Dorsolateral prefrontal cortex (tissue), 120 donors: ENCODE measurements at regions of chr12 and their contacts with region 1.

Region 1: DNA sequence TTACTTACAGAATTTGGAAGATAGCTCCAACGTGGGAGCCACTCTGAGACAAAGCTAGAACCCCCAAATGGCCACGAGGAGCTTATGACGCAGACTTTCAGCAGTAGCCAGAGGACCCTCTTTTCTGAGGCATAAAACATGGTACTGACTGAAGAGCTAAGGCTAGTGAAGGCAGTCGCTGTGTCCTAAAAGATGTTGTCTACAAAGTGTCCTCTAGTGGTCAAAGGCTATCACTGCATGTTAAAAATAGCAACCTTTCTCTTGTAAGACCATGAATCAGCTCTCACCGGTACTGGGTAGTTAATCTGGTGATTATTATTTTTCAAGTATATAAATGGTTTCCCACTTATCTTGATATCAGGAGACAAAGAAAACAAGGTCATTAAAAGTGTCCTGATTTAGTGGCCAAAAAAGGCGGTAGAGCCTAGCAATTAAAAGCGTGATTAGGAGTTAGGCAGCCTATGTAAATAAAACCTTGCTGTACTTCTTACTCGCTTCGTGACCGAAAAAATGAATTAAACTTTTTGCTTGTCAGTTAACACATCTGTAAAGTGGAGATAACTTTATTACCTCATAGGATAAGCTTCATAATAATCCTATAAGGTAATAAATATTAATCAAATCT is 47.0 kb upstream of the LGR5 start:
- DNase-seq: no peak
- H3K4me3 ChIP-seq: no peak overlapping the region
- H3K27ac ChIP-seq: no peak overlapping the region
- H3K27me3 ChIP-seq: peaks cover 0 to 7% (median 0%) of the 10 kb centered on the region in 45 donors
- CTCF ChIP-seq: peak; percentile 48 to 88 (median 75)

Region 2: DNA sequence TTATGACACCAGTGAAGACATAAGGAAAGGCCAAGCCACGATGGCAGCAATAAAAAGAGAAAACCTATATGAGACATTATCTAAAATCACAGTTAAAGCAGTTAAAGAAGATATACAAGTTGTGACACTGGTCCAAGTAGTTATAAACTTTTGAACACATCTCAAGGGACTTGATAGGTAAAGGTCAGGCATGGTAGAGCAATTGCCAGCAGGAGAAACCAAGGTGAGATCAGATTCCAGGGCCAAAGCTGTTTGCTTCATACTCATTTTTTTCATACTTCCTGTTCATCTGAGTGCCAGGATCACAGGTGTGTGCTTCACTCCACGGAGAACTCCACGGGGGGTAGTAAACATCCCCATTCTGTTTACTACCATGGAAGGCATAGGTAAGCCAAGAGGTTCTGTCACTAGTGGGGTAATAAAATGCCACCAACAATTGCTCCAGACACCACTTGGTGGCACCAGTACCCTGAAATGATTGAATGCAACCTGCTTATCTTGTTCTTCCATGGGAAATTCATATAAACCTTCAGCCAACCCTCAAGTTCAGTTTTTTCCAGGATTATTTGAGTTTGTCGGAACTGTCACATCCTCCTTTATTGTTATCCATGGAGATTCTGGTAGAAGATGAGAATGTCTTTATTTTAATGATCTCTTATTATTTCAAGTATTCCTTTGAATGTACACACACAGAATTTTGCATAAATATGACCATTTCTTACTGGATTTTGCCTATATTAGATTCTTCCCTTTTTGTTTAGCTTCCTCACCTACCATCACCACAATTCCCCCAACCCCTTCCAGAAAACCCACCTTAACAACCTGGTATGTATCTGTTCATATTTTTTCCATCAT is 175.7 kb before region 1 on chr12:
- intact Hi-C with region 1: loop called in 1 of 2 experiments (anchors 5 kb)
- DNase-seq: peak in 4 of 10 donors; percentile 5 to 62 (median 52)
- H3K4me3 ChIP-seq: no peak overlapping the region
- H3K27ac ChIP-seq: no peak overlapping the region
- H3K27me3 ChIP-seq: no peaks in the 10 kb centered on the region
- CTCF ChIP-seq: peak; percentile 28 to 77 (median 60)

Region 3: DNA sequence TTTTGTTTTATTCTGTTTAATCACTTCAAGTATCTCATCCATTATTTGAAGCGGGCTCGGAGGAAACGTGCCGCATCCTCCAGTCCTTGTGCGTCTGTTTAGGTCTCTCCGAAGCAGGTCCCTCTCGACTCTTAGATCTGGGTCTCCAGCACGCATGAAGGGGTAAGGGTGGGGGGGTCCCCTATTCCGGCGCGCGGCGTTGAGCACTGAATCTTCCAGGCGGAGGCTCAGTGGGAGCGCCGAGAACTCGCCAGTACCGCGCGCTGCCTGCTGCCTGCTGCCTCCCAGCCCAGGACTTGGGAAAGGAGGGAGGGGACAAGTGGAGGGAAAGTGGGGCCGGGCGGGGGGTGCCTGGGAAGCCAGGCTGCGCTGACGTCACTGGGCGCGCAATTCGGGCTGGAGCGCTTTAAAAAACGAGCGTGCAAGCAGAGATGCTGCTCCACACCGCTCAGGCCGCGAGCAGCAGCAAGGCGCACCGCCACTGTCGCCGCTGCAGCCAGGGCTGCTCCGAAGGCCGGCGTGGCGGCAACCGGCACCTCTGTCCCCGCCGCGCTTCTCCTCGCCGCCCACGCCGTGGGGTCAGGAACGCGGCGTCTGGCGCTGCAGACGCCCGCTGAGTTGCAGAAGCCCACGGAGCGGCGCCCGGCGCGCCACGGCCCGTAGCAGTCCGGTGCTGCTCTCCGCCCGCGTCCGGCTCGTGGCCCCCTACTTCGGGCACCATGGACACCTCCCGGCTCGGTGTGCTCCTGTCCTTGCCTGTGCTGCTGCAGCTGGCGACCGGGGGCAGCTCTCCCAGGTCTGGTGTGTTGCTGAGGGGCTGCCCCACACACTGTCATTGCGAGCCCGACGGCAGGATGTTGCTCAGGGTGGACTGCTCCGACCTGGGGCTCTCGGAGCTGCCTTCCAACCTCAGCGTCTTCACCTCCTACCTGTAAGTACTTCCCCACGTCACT is 47.0 kb after region 1 on chr12 and contains the start of gene LGR5:
- intact Hi-C with region 1: no loop called
- DNase-seq: peak; percentile 27 to 95 (median 90)
- H3K4me3 ChIP-seq: peak within 1 kb of the TSS; percentile 47 to 84 (median 69)
- H3K27ac ChIP-seq: peak within 1 kb of the TSS in 53 of 59 donors; percentile 4 to 89 (median 61)
- H3K27me3 ChIP-seq: peaks cover 0 to 51% (median 9%) of the 10 kb centered on the region in 45 donors
- CTCF ChIP-seq: peak in 19 of 56 donors; percentile 7 to 50 (median 15)
- total RNA-seq, gene LGR5: 1.1 to 33.8 (median 7.3) TPM